Activated CD8-positive, alpha-beta T cell treated with anti-CD3 and anti-CD28 coated beads for 36 hours (primary cell): ENCODE measurements at regions of chr2 and their contacts with region 1.

Region 1: GRCh38 chr2:196143730-196144131 is 27.6 kb downstream of the STK17B start:
- DNase-seq: peak; percentile 45
- ATAC-seq: peak; percentile 56
- H3K4me3 Mint-ChIP-seq: peak overlapping the region; percentile 28
- H3K27ac Mint-ChIP-seq: peak overlapping the region; percentile 79
- H3K4me1 Mint-ChIP-seq: peaks cover 73% of the 10 kb centered on the region
- H3K27me3 Mint-ChIP-seq: no peaks in the 10 kb centered on the region
- CTCF ChIP-seq: no peak

Region 2: GRCh38 chr2:195352581-195352980 is 791.1 kb before region 1 on chr2:
- CTCF ChIA-PET with region 1: no interaction called
- POLR2A ChIA-PET with region 1: no interaction called
- intact Hi-C with region 1: no loop called
- DNase-seq: no peak
- ATAC-seq: no peak
- H3K4me3 Mint-ChIP-seq: no peak overlapping the region
- H3K27ac Mint-ChIP-seq: no peak overlapping the region
- H3K4me1 Mint-ChIP-seq: no peaks in the 10 kb centered on the region
- H3K27me3 Mint-ChIP-seq: no peaks in the 10 kb centered on the region
- CTCF ChIP-seq: no peak

Region 3: GRCh38 chr2:196101325-196101991 is 42.3 kb before region 1 on chr2:
- CTCF ChIA-PET with region 1: no interaction called
- POLR2A ChIA-PET with region 1: no interaction called
- intact Hi-C with region 1: loop called (anchors 5 kb)
- DNase-seq: peak; percentile 71
- ATAC-seq: peak; percentile 95
- H3K4me3 Mint-ChIP-seq: no peak overlapping the region
- H3K27ac Mint-ChIP-seq: peak overlapping the region; percentile 53
- H3K4me1 Mint-ChIP-seq: peaks cover 32% of the 10 kb centered on the region
- H3K27me3 Mint-ChIP-seq: no peaks in the 10 kb centered on the region
- CTCF ChIP-seq: no peak

Region 4: GRCh38 chr2:196123679-196124373 is 19.9 kb before region 1 on chr2:
- CTCF ChIA-PET with region 1: no interaction called
- POLR2A ChIA-PET with region 1: no interaction called
- intact Hi-C with region 1: no loop called
- DNase-seq: no peak
- ATAC-seq: no peak
- H3K4me3 Mint-ChIP-seq: no peak overlapping the region
- H3K27ac Mint-ChIP-seq: no peak overlapping the region
- H3K4me1 Mint-ChIP-seq: no peaks in the 10 kb centered on the region
- H3K27me3 Mint-ChIP-seq: no peaks in the 10 kb centered on the region
- CTCF ChIP-seq: no peak